ENCODE measurements at regions of chr16 and their contacts with region 1.

Region 1: GRCh38 chr16:54929090-54930004 is 1.3 kb upstream of the IRX5 start:
- DNase-seq: peak; percentile 99
- ATAC-seq: peak; percentile 96
- H3K4me3 Mint-ChIP-seq: peak overlapping the region; percentile 72
- H3K27ac Mint-ChIP-seq: peak overlapping the region; percentile 62
- H3K4me1 Mint-ChIP-seq: peaks cover 32% of the 10 kb centered on the region
- H3K27me3 Mint-ChIP-seq: peaks cover 57% of the 10 kb centered on the region

Region 2: GRCh38 chr16:53435066-53435688 is 1494.2 kb before region 1 on chr16:
- CTCF ChIA-PET with region 1: no interaction called
- POLR2A ChIA-PET with region 1: no interaction called
- intact Hi-C with region 1: loop called in 1 of 2 experiments (anchors 2 kb)
- DNase-seq: peak; percentile 69
- ATAC-seq: peak; percentile 67
- H3K4me3 Mint-ChIP-seq: peak overlapping the region; percentile 98
- H3K27ac Mint-ChIP-seq: peak overlapping the region; percentile 95
- H3K4me1 Mint-ChIP-seq: peaks cover 42% of the 10 kb centered on the region
- H3K27me3 Mint-ChIP-seq: no peaks in the 10 kb centered on the region

Region 3: GRCh38 chr16:53549970-53550690 is 1379.2 kb before region 1 on chr16:
- CTCF ChIA-PET with region 1: interaction called, 3 read pairs
- POLR2A ChIA-PET with region 1: no interaction called
- intact Hi-C with region 1: loop called in 1 of 2 experiments (anchors 5 kb)
- DNase-seq: peak; percentile 69
- ATAC-seq: peak; percentile 82
- H3K4me3 Mint-ChIP-seq: no peak overlapping the region
- H3K27ac Mint-ChIP-seq: no peak overlapping the region
- H3K4me1 Mint-ChIP-seq: peaks cover 29% of the 10 kb centered on the region
- H3K27me3 Mint-ChIP-seq: peaks cover 19% of the 10 kb centered on the region

Region 4: GRCh38 chr16:53773150-53773846 is 1156.0 kb before region 1 on chr16:
- CTCF ChIA-PET with region 1: no interaction called
- POLR2A ChIA-PET with region 1: no interaction called
- intact Hi-C with region 1: loop called in 1 of 2 experiments (anchors 10 kb)
- DNase-seq: no peak
- ATAC-seq: no peak
- H3K4me3 Mint-ChIP-seq: no peak overlapping the region
- H3K27ac Mint-ChIP-seq: no peak overlapping the region
- H3K4me1 Mint-ChIP-seq: peaks cover 30% of the 10 kb centered on the region
- H3K27me3 Mint-ChIP-seq: no peaks in the 10 kb centered on the region

Region 5: DNA sequence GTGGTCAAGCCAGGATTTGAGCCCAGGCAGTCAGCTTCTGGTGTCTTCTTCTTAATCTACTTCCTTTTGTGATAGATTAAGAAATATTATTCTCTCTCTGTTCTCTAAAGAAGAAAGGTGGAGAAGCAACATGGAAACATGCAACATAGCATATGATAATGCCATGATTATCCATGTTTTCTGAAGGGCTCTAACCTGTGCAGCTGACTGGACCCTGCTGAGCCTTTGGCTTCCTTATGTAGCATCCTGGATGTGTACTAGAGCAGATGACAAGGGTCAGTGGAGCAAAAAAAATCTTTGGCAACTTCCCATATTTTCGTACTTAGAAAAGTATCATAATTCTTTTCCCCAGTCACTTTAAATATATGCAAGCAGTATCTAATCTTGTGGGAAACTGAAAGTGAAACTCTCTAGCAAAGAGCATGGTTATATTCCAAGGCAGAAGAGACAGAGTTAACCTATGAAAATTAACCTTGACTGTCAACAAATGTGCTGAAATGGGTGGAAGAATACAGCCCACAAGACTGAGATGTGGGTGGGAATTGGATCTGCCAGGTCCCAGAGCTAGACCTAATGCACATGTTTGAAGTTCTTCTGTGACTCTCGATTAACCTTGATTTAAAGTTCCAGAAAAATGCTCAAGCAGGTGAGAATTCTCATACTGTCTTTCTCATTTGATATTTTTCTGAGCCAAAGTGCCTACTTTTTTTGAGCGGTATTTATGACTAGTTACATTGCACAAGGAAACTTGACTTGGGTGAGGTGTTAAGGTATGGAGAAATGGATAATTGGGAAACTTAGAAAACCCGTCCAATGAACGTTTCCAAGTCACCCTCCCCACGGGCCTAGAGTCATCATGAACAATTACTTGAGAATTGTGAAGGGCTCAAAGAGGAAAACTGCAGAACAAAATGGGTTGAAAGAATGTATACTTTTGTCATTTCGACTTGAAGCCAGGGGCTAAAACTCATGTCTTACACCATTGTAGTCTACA is 976.8 kb before region 1 on chr16:
- CTCF ChIA-PET with region 1: no interaction called
- POLR2A ChIA-PET with region 1: no interaction called
- intact Hi-C with region 1: loop called in 1 of 2 experiments (anchors 5 kb)
- DNase-seq: no peak
- ATAC-seq: peak; percentile 83
- H3K4me3 Mint-ChIP-seq: peak overlapping the region; percentile 3
- H3K27ac Mint-ChIP-seq: peak overlapping the region; percentile 23
- H3K4me1 Mint-ChIP-seq: peaks cover 19% of the 10 kb centered on the region
- H3K27me3 Mint-ChIP-seq: no peaks in the 10 kb centered on the region

Region 6: DNA sequence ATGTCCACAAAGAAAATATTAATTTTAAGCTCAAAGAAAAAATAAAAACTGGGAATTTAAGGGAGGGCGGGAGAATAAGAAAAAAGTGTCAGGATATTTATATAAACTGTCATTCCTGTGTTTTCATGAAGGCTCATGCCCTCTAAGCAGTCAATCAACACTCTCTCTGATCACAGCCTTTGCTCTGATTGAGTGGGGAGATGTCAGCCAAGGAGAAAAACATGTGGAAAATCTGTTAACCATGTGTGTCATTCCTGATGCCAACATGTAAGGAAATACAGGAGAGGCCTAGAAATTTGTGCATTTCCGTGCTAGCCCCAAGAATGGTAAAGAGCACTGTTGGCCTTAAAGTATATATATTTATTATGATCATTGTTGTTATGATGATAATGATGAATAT is 136.5 kb before region 1 on chr16:
- CTCF ChIA-PET with region 1: no interaction called
- POLR2A ChIA-PET with region 1: no interaction called
- intact Hi-C with region 1: no loop called
- DNase-seq: no peak
- ATAC-seq: no peak
- H3K4me3 Mint-ChIP-seq: no peak overlapping the region
- H3K27ac Mint-ChIP-seq: no peak overlapping the region
- H3K4me1 Mint-ChIP-seq: no peaks in the 10 kb centered on the region
- H3K27me3 Mint-ChIP-seq: peaks cover 2% of the 10 kb centered on the region

Region 7: DNA sequence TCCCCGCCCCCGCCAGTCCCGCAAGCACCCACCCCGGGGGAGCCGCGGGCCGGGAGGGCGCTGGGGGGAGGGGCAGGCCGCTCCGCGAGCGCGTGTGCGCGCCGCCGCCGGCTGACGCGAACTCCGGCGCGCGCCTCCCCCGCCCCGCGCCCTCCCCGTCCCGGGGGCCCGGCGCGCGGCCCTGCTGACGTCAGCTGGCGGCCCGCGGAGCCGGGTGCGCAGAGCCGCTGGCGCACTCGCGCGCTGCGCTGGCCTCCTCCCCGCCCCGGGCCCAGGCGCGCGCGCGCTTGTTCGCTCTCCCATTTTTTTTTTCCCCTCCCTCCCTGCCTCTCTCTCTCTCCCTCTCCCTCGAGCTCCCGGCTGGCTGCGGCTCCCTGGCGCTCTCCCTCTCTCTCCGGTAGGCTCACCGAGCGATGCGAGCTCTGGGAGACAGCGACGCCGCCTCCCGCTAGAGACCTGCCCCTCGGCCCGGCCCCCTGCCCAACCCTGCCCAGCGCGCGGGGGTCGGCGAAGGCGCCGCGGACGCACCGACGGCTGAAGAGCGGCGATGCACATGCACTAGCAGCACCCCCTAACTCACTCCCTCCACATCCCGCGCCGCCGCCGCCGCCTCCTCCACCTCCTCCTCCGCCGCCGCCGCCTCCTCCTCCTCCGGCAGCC is 1261.9 kb after region 1 on chr16 and contains the start of gene GNAO1:
- CTCF ChIA-PET with region 1: no interaction called
- POLR2A ChIA-PET with region 1: no interaction called
- intact Hi-C with region 1: loop called in 1 of 2 experiments (anchors 2 kb)
- DNase-seq: peak; percentile 79
- ATAC-seq: peak; percentile 73
- H3K4me3 Mint-ChIP-seq: peak within 1 kb of the TSS; percentile 69
- H3K27ac Mint-ChIP-seq: no peak within 1 kb of the TSS
- H3K4me1 Mint-ChIP-seq: peaks cover 31% of the 10 kb centered on the region
- H3K27me3 Mint-ChIP-seq: peaks cover 60% of the 10 kb centered on the region
- total RNA-seq, gene GNAO1: 1.5 to 2.3 TPM

Measured in activated CD4-positive, alpha-beta T cell treated with anti-CD3 and anti-CD28 coated beads for 36 hours (primary cell).